AG04450 (cell line): ENCODE measurements at regions of chr14 and their contacts with region 1.

Region 1: GRCh38 chr14:23186913-23187654 is 3.6 kb upstream of the SLC7A8 start:
- DNase-seq: peak; percentile 47
- H3K4me3 ChIP-seq: no peak overlapping the region
- H3K27ac ChIP-seq: no peak overlapping the region
- H3K27me3 ChIP-seq: peaks cover 24% of the 10 kb centered on the region
- CTCF ChIP-seq: peak; percentile 89

Region 2: GRCh38 chr14:23114669-23115491 is 72.2 kb before region 1 on chr14:
- CTCF ChIA-PET with region 1: interaction called, 818 read pairs
- POLR2A ChIA-PET with region 1: no interaction called
- DNase-seq: peak; percentile 89
- H3K4me3 ChIP-seq: peak overlapping the region; percentile 17; the same call in 1 of the 2 replicates
- H3K27ac ChIP-seq: peak overlapping the region; percentile 91
- H3K27me3 ChIP-seq: no peaks in the 10 kb centered on the region
- CTCF ChIP-seq: peak; percentile 16

Region 3: GRCh38 chr14:23130871-23131270 is 56.2 kb before region 1 on chr14:
- CTCF ChIA-PET with region 1: interaction called, 818 read pairs
- POLR2A ChIA-PET with region 1: no interaction called
- DNase-seq: no peak
- H3K4me3 ChIP-seq: no peak overlapping the region
- H3K27ac ChIP-seq: no peak overlapping the region
- H3K27me3 ChIP-seq: peaks cover 12% of the 10 kb centered on the region
- CTCF ChIP-seq: no peak

Region 4: DNA sequence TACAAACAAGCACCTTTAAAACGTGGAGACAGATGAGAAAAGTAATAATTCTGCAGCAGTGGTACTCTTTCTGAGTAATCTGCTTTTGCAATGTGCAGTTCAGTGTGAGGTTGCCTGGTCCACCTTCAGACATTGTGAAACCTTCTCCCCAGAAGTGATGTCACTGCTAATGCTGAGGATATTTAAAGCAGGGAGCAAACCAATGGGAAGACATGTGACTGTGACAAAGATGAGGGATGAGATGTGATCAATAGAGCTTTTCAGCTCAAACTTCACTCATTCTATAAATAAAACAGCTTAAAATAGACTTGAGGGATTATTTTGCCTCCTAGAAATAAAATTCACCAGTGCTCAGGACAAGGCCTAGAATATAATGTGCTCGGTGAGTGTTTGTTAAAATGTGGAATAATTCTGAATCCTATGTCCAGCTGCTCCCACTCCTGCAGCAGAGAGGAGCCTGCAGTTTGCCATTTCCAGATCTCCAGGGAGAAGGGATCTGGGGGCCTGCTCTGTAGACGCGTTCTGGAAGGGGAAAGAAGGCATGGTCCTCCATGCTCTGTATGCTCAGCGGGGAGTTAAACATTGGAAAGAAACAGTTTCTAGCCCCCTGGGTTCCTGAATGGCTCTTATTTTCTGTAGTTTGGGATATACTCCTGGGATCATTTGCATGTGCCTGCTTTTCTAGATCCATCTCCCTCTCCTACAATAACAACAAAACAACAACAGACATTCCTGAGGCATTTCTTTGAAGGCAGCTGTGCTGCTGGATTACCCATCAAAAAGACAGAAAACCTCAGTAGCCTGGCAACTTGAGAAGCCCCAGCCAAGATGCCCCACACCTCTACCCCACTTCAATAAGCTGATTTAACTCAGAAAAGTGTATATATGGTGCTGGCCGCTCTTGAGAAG is 12.6 kb before region 1 on chr14:
- CTCF ChIA-PET with region 1: interaction called, 46 read pairs
- POLR2A ChIA-PET with region 1: no interaction called
- DNase-seq: no peak
- H3K4me3 ChIP-seq: no peak overlapping the region
- H3K27ac ChIP-seq: no peak overlapping the region
- H3K27me3 ChIP-seq: peaks cover 23% of the 10 kb centered on the region
- CTCF ChIP-seq: no peak

Region 5: GRCh38 chr14:23202001-23202400 is 14.9 kb after region 1 on chr14:
- CTCF ChIA-PET with region 1: interaction called, 11 read pairs
- POLR2A ChIA-PET with region 1: no interaction called
- DNase-seq: no peak
- H3K4me3 ChIP-seq: no peak overlapping the region
- H3K27ac ChIP-seq: no peak overlapping the region
- H3K27me3 ChIP-seq: peaks cover 12% of the 10 kb centered on the region
- CTCF ChIP-seq: no peak

Region 6: DNA sequence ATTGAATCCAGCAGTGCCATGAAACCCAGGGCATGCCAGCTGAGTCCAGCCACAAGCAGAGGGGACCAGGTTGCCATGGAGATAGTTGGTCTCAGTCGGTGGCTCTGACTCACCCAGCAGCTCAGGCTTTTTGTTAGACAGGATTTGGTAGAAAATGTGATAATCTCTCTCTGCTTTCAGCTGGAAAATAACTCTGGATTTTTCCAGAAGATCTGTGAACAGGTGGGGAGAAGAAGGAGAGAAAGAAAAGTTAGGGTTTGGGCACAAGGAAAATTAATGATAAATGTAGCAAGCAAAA is 243.7 kb after region 1 on chr14:
- CTCF ChIA-PET with region 1: no interaction called
- POLR2A ChIA-PET with region 1: no interaction called
- DNase-seq: no peak
- H3K4me3 ChIP-seq: no peak overlapping the region
- H3K27ac ChIP-seq: no peak overlapping the region
- H3K27me3 ChIP-seq: peaks cover 11% of the 10 kb centered on the region
- CTCF ChIP-seq: no peak

Region 7: GRCh38 chr14:23446291-23446851 is 259.3 kb after region 1 on chr14:
- CTCF ChIA-PET with region 1: no interaction called
- POLR2A ChIA-PET with region 1: no interaction called
- DNase-seq: no peak
- H3K4me3 ChIP-seq: no peak overlapping the region
- H3K27ac ChIP-seq: no peak overlapping the region
- H3K27me3 ChIP-seq: peaks cover 9% of the 10 kb centered on the region
- CTCF ChIP-seq: no peak